Heart right ventricle (tissue), 16 donors: ENCODE measurements at regions of chr15 and their contacts with region 1.

Region 1: GRCh38 chr15:101242160-101242998 is 9.5 kb downstream of the CHSY1 start:
- DNase-seq: peak in 1 of 2 donors; percentile 34
- ATAC-seq: peak in 7 of 8 donors; percentile 37 to 70 (median 45)
- H3K4me3 ChIP-seq: peak overlapping the region in 2 of 10 donors; percentile 7 to 30
- H3K27ac ChIP-seq: peak overlapping the region in 8 of 10 donors; percentile 4 to 80 (median 46)
- H3K4me1 ChIP-seq: peaks cover 10 to 100% (median 75%) of the 10 kb centered on the region in 9 donors
- H3K27me3 ChIP-seq: no peaks in the 10 kb centered on the region
- CTCF ChIP-seq: no peak

Region 2: GRCh38 chr15:101201406-101202174 is 40.8 kb before region 1 on chr15:
- intact Hi-C with region 1: loop called in 3 of 10 experiments (anchors 5 to 10 kb)
- DNase-seq: peak; percentile 84 to 91
- ATAC-seq: peak; percentile 89 to 96 (median 94)
- H3K4me3 ChIP-seq: no peak overlapping the region
- H3K27ac ChIP-seq: peak overlapping the region; percentile 1 to 85 (median 48)
- H3K4me1 ChIP-seq: peaks cover 4 to 88% (median 52%) of the 10 kb centered on the region in 9 donors
- H3K27me3 ChIP-seq: no peaks in the 10 kb centered on the region
- CTCF ChIP-seq: no peak

Region 3: GRCh38 chr15:101288908-101289513 is 46.6 kb after region 1 on chr15:
- intact Hi-C with region 1: no loop called
- DNase-seq: no peak
- ATAC-seq: peak in 3 of 8 donors; percentile 15 to 46 (median 28)
- H3K4me3 ChIP-seq: no peak overlapping the region
- H3K27ac ChIP-seq: no peak overlapping the region
- H3K4me1 ChIP-seq: peaks cover 0 to 28% (median 24%) of the 10 kb centered on the region in 9 donors
- H3K27me3 ChIP-seq: no peaks in the 10 kb centered on the region
- CTCF ChIP-seq: peak; percentile 29 to 73 (median 66)